GM23248 (cell line): ENCODE measurements at regions of chr4 and their contacts with region 1.

Region 1: GRCh38 chr4:140861359-140862176 is 105.4 kb upstream of the TBC1D9 start:
- DNase-seq: peak; percentile 84
- H3K4me3 ChIP-seq: no peak overlapping the region
- H3K27ac ChIP-seq: no peak overlapping the region
- H3K4me1 ChIP-seq: peaks cover 9% of the 10 kb centered on the region; the same call in 1 of the 2 replicates
- H3K27me3 ChIP-seq: no peaks in the 10 kb centered on the region

Region 2: DNA sequence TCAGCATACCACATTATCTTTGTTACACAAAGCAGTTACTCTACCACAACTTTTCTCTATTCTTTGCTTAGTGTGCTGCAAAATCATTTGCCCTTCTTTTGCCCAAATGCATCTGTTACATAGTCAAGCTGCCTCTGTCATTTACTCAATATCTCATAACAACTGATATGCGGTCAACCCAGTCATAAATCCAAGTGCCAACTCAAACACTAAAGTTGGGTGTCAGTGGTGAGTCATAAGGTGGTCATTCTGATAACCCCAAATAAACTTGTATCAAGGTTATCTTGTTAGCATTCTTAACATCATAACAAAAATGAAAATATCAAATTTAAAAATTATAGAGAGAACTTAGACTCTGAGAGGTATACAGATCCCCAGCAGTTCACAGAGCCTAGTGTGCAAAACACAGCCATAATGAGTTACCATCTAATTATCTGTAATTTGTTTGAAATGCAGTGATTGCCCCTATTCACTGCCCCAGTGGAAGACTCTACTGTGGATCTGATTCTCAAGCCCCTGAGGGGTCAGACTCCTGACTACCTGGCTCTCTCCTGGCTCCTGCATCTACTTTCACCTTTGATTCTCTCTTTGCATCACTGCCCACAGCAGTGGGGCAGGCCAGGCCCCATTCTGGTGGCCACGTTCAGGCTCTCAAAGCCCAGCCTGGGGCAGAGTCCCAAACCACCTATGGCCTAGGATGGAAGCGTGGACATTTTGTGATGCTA is 134.6 kb before region 1 on chr4:
- in situ Hi-C with region 1: no loop called
- DNase-seq: peak; percentile 4
- H3K4me3 ChIP-seq: no peak overlapping the region
- H3K27ac ChIP-seq: no peak overlapping the region
- H3K4me1 ChIP-seq: peaks cover 21% of the 10 kb centered on the region
- H3K27me3 ChIP-seq: no peaks in the 10 kb centered on the region

Region 3: GRCh38 chr4:141133146-141133998 is 271.8 kb after region 1 on chr4 and contains the start of gene RNF150:
- in situ Hi-C with region 1: loop called (anchors 5 kb)
- DNase-seq: peak; percentile 92
- H3K4me3 ChIP-seq: peak within 1 kb of the TSS; percentile 96
- H3K27ac ChIP-seq: peak within 1 kb of the TSS; percentile 15; the same call in 1 of the 2 replicates
- H3K4me1 ChIP-seq: peaks cover 21% of the 10 kb centered on the region
- H3K27me3 ChIP-seq: no peaks in the 10 kb centered on the region
- total RNA-seq, gene RNF150: 10.5 and 11.6 TPM in 2 replicates